Mammary epithelial cell (primary cell): ENCODE measurements at regions of chr16 and their contacts with region 1.

Region 1: DNA sequence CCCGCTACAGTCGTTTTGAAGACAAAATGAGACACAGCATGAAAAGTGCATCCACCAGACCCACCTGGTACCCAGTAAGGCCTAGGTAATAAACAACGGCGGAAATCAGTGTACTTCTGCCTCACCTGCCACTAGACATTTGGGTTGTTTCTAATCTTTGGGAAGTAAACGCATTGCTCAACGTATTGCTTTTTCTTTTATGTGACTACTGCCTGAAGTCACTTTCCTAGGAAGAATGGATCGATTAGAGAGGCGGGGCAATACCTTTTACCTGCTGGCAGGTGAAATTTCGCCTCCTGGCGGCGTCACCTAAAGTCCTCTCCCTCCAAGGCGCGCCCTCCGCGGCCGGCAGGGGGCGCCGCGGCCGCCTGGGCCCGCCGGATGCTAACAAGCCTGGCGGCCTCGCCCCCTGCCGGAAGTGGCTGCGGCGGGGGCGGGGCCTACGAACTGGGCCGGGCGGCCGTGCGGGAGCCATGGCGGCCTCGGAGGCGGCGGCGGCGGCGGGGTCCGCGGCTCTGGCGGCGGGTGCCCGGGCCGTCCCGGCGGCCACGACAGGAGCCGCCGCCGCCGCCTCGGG is at the start of gene ATMIN:
- DNase-seq: peak; percentile 82
- H3K4me3 ChIP-seq: peak within 1 kb of the TSS; percentile 65 to 86 (median 84)
- H3K27ac ChIP-seq: peak within 1 kb of the TSS; percentile 66
- H3K4me1 ChIP-seq: peaks cover 13% of the 10 kb centered on the region
- H3K27me3 ChIP-seq: no peaks in the 10 kb centered on the region
- CTCF ChIP-seq: peak; percentile 80 to 95
- total RNA-seq, gene ATMIN: 31.7 to 60.8 TPM

Region 2: DNA sequence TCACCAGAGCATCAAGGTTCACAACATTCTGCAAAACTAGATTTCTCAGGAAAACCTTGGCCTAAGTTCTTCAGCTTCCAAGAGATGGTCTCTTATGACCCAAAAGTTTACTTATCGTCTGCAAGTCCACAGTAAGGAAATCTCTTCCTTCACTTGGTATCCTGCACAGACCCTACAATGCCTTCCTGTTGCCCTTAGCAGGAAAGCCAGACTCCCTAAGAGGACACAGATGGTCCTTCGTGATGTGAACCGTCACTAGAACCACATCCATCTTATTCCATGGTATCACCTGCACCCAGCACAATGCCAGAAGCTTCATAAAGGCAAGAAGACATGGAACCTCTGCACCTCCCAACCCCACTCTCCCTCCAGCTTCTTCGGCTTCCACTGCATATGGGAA is 62.9 kb before region 1 on chr16:
- CTCF ChIA-PET with region 1: no interaction called
- dilution Hi-C with region 1: no loop called
- in situ Hi-C with region 1: no loop called
- intact Hi-C with region 1: no loop called
- DNase-seq: no peak
- H3K4me3 ChIP-seq: no peak overlapping the region
- H3K27ac ChIP-seq: no peak overlapping the region
- H3K4me1 ChIP-seq: no peaks in the 10 kb centered on the region
- H3K27me3 ChIP-seq: no peaks in the 10 kb centered on the region
- CTCF ChIP-seq: no peak

Region 3: DNA sequence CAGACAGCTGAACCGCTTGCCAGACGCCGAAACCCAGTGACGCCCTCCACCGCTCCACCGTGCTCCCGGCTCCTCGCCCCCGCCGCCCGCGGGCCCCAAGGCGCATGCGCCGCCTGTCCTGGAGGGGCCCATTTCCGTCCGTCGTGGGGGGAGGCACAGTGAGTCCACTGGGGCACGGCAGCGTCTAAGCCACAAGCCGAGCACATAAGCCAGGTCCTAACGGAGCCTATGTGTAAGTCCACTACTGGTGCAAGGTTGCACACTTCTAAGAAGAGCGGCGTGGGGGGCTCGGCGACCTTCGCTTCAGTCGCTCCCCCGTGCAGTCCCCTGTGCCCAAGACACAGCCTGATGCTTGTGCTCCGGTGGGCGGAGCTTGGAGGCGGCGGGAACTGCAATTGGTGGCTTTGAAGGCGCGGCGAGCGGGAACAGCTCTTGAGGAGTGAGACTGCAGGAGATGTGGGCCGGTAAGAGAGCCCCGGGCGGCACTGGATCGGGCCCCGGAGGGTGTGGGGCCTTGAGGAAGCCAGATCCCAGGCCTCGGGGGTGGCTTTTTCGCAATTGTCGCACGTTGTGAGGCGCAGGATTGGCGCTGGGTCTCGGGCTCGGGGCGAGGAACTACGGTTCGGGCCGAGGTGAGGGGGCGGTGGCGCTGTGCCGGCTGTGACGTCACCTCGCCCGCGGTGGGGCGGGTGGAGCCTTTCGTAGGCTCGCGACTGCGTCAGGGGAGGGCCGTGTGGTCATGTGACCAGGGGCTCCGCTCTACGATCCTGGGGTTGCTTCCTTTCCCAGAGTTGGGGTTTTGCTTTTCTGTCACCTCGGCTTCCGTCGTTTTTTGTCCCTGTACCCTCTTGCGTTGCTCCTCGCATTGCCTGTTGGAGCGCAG is 28.4 kb before region 1 on chr16 and contains the starts of genes CENPN and CMC2:
- CTCF ChIA-PET with region 1: interaction called, 4 read pairs
- dilution Hi-C with region 1: no loop called
- in situ Hi-C with region 1: no loop called
- intact Hi-C with region 1: loop called (anchors 1 kb)
- DNase-seq: peak; percentile 98
- H3K4me3 ChIP-seq: peak within 1 kb of the TSS; percentile 86 to 95 (median 93)
- H3K27ac ChIP-seq: peak within 1 kb of the TSS; percentile 97
- H3K4me1 ChIP-seq: peaks cover 9% of the 10 kb centered on the region
- H3K27me3 ChIP-seq: no peaks in the 10 kb centered on the region
- CTCF ChIP-seq: peak in 1 of 2 donors; percentile 29
- total RNA-seq, gene CENPN: 15.2 to 32.5 TPM
- total RNA-seq, gene CMC2: 30.5 to 73.1 TPM

Region 4: GRCh38 chr16:81127051-81127450 is 91.6 kb after region 1 on chr16:
- CTCF ChIA-PET with region 1: no interaction called
- dilution Hi-C with region 1: no loop called
- in situ Hi-C with region 1: no loop called
- intact Hi-C with region 1: loop called (anchors 1 kb)
- DNase-seq: peak; percentile 97
- H3K4me3 ChIP-seq: no peak overlapping the region
- H3K27ac ChIP-seq: no peak overlapping the region
- H3K4me1 ChIP-seq: peaks cover 13% of the 10 kb centered on the region
- H3K27me3 ChIP-seq: no peaks in the 10 kb centered on the region
- CTCF ChIP-seq: no peak

Region 5: DNA sequence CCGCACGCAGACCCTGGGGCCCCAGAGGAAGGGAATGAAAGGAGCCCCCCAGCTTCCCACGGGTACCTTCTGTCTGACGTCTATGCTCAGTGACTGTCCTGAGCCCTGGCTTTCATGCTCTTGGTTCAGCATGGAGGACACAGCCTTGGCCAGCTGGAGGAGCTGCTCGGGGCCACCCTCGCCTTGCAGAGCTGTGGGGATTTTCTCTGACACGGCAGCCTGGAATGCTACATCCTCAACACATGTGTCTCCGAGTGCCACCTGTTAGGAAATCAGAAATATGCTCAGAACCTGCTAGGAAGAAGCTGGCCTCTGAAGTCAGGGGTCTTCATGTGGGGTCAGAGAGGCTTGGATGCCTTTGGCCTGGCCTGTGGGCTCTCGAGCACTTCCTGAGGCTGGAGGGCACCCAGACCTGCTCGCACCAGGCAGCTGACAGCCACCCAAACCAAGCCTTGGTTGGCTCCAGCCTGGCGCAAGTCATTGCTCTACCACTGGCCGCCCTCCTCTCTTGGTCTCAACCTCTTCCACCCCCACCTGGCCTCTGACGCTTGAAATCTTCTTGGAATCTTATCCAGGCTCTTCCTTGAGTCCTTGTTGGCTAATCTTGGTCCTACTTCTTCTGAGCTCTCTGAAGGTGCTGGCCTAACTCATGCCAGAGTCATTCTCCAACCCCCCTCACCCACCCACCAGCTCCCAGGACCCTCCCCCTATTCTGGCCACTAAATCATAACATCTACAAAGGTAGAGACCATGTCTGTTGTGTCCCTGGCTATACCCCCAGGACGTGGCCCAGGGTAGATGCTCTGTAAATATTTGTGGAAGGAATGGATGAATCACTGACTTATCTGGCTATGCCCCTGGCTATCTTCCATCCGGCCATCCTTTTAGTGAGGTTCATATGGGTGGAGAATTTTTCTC is 139.4 kb after region 1 on chr16:
- CTCF ChIA-PET with region 1: no interaction called
- dilution Hi-C with region 1: loop called (anchors 5 kb)
- in situ Hi-C with region 1: no loop called
- intact Hi-C with region 1: no loop called
- DNase-seq: peak; percentile 53
- H3K4me3 ChIP-seq: no peak overlapping the region
- H3K27ac ChIP-seq: no peak overlapping the region
- H3K4me1 ChIP-seq: peaks cover 15% of the 10 kb centered on the region
- H3K27me3 ChIP-seq: no peaks in the 10 kb centered on the region
- CTCF ChIP-seq: peak in 1 of 2 donors; percentile 7

Region 6: GRCh38 chr16:81314603-81315270 is 279.3 kb after region 1 on chr16 and contains the start of gene GAN:
- CTCF ChIA-PET with region 1: no interaction called
- dilution Hi-C with region 1: no loop called
- in situ Hi-C with region 1: no loop called
- intact Hi-C with region 1: loop called (anchors 10 kb)
- DNase-seq: peak; percentile 96
- H3K4me3 ChIP-seq: peak within 1 kb of the TSS; percentile 63 to 89 (median 79)
- H3K27ac ChIP-seq: peak within 1 kb of the TSS; percentile 76
- H3K4me1 ChIP-seq: peaks cover 31% of the 10 kb centered on the region
- H3K27me3 ChIP-seq: no peaks in the 10 kb centered on the region
- CTCF ChIP-seq: no peak
- total RNA-seq, gene GAN: 14.9 to 33.2 TPM

Region 7: GRCh38 chr16:81737885-81738786 is 702.6 kb after region 1 on chr16:
- CTCF ChIA-PET with region 1: interaction called, 5 read pairs
- dilution Hi-C with region 1: no loop called
- in situ Hi-C with region 1: loop called (anchors 25 kb)
- intact Hi-C with region 1: loop called (anchors 1 kb)
- DNase-seq: peak; percentile 88
- H3K4me3 ChIP-seq: peak overlapping the region in 1 of 3 experiments; percentile 18
- H3K27ac ChIP-seq: no peak overlapping the region
- H3K4me1 ChIP-seq: peaks cover 3% of the 10 kb centered on the region
- H3K27me3 ChIP-seq: no peaks in the 10 kb centered on the region
- CTCF ChIP-seq: peak; percentile 81 to 83